B cell (primary cell): ENCODE measurements at regions of chr4 and their contacts with region 1.

Region 1: GRCh38 chr4:42568610-42569207 is 88.2 kb downstream of the ATP8A1 start:
- DNase-seq: peak; percentile 80
- ATAC-seq: peak; percentile 90
- H3K4me3 ChIP-seq: no peak overlapping the region
- H3K4me3 Mint-ChIP-seq: no peak overlapping the region
- H3K27ac ChIP-seq: peak overlapping the region in 1 of 2 donors; percentile 17
- H3K27ac Mint-ChIP-seq: no peak overlapping the region
- H3K4me1 ChIP-seq: no peaks in the 10 kb centered on the region
- H3K4me1 Mint-ChIP-seq: no peaks in the 10 kb centered on the region
- H3K27me3 ChIP-seq: no peaks in the 10 kb centered on the region
- H3K27me3 Mint-ChIP-seq: no peaks in the 10 kb centered on the region
- CTCF ChIP-seq: peak; percentile 90

Region 2: DNA sequence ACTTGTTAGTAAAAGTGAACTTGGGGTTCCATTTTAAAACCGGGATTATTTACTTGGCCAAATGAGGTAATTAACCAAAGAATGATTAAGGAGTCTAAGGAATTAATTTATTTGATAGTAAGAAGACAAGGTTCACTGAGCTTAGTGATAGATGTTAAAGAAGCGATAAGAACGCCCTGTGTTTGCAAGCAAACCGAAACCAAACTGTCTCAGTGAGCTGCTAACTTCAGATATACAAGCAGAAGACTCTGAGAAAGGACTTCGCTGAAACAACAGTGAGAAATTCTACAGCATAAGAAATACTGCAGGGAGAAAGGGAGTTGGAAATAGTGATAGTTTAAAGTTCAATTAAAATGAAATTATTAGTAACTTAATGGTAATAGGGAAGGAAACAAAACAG is 209.0 kb before region 1 on chr4:
- CTCF ChIA-PET with region 1: no interaction called
- POLR2A ChIA-PET with region 1: no interaction called
- intact Hi-C with region 1: no loop called
- DNase-seq: no peak
- ATAC-seq: no peak
- H3K4me3 ChIP-seq: no peak overlapping the region
- H3K4me3 Mint-ChIP-seq: no peak overlapping the region
- H3K27ac ChIP-seq: no peak overlapping the region
- H3K27ac Mint-ChIP-seq: no peak overlapping the region
- H3K4me1 ChIP-seq: no peaks in the 10 kb centered on the region
- H3K4me1 Mint-ChIP-seq: no peaks in the 10 kb centered on the region
- H3K27me3 ChIP-seq: peaks cover 0 to 3% (median 2%) of the 10 kb centered on the region in 4 experiments
- H3K27me3 Mint-ChIP-seq: peaks cover 31% of the 10 kb centered on the region
- CTCF ChIP-seq: no peak

Region 3: DNA sequence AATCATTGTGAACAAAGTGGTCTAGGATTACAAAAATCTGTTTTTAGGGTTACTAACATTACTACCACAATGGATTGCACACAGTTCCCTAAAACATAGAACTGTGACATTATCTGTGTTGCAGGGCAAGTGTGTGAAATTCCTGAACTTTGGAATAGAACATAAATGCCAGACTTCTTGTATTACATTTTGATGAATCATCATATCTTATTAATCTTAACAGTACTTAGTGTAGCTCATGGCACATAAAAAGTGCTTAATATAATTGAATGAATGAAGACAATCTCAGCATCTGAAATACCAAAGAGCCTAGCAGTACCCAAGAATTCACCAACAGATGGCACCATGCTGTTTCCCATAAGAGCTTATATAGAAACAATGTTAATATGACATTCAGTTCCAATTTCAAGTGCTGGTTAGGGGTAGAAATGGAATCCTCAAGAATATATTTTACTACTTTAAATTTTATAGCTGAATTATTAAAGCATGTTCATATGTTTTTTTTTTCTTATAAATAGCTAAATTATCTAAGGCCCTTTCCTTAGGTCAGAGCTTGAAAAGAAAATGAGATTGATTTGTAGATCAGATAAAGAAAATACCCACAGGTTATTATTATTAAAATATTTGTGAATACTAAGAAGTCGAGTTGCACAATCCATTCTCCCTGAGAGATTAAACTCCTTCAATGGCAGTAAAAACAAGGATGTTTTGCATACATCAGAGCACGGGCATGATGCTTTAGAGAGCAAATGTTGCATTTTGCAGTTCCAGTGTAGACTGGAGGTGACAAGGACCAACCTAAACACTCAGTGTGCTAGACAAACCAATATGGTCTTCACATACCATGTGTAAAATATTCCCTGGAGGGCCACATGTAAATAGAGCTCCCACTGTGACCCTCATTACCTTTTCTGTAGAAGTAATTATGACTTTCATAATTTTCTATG is 197.1 kb before region 1 on chr4:
- CTCF ChIA-PET with region 1: no interaction called
- POLR2A ChIA-PET with region 1: no interaction called
- intact Hi-C with region 1: no loop called
- DNase-seq: peak; percentile 31
- ATAC-seq: no peak
- H3K4me3 ChIP-seq: no peak overlapping the region
- H3K4me3 Mint-ChIP-seq: no peak overlapping the region
- H3K27ac ChIP-seq: no peak overlapping the region
- H3K27ac Mint-ChIP-seq: no peak overlapping the region
- H3K4me1 ChIP-seq: no peaks in the 10 kb centered on the region
- H3K4me1 Mint-ChIP-seq: no peaks in the 10 kb centered on the region
- H3K27me3 ChIP-seq: peaks cover 0 to 5% (median 0%) of the 10 kb centered on the region in 4 experiments
- H3K27me3 Mint-ChIP-seq: peaks cover 15% of the 10 kb centered on the region
- CTCF ChIP-seq: peak; percentile 56

Region 4: GRCh38 chr4:42488114-42488513 is 80.6 kb before region 1 on chr4:
- CTCF ChIA-PET with region 1: no interaction called
- POLR2A ChIA-PET with region 1: no interaction called
- intact Hi-C with region 1: no loop called
- DNase-seq: no peak
- ATAC-seq: no peak
- H3K4me3 ChIP-seq: no peak overlapping the region
- H3K4me3 Mint-ChIP-seq: no peak overlapping the region
- H3K27ac ChIP-seq: no peak overlapping the region
- H3K27ac Mint-ChIP-seq: no peak overlapping the region
- H3K4me1 ChIP-seq: peaks cover 0 to 4% of the 10 kb centered on the region in 2 donors
- H3K4me1 Mint-ChIP-seq: peaks cover 13% of the 10 kb centered on the region
- H3K27me3 ChIP-seq: no peaks in the 10 kb centered on the region
- H3K27me3 Mint-ChIP-seq: no peaks in the 10 kb centered on the region
- CTCF ChIP-seq: no peak

Region 5: DNA sequence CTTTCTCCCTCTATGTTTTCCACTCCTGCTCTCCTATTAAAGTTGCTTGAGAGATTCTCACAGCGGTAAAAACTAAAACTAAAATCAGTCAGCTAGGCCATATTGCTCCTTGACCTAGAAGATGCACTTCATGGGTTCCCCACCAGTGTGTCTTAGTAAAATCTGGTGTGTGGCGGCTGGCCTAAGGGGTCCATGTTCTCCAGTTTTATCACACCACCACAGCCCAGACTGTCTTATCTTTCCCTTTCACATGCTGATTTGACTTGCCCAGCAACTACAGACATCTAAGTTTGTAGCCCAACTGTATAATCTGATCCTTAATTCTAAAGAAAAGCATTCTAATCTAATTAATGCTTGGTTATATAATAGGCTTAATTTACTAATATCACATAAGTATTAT is 20.2 kb after region 1 on chr4:
- CTCF ChIA-PET with region 1: interaction called, 11 read pairs
- POLR2A ChIA-PET with region 1: no interaction called
- intact Hi-C with region 1: no loop called
- DNase-seq: no peak
- ATAC-seq: no peak
- H3K4me3 ChIP-seq: no peak overlapping the region
- H3K4me3 Mint-ChIP-seq: no peak overlapping the region
- H3K27ac ChIP-seq: no peak overlapping the region
- H3K27ac Mint-ChIP-seq: no peak overlapping the region
- H3K4me1 ChIP-seq: no peaks in the 10 kb centered on the region
- H3K4me1 Mint-ChIP-seq: peaks cover 3% of the 10 kb centered on the region
- H3K27me3 ChIP-seq: no peaks in the 10 kb centered on the region
- H3K27me3 Mint-ChIP-seq: no peaks in the 10 kb centered on the region
- CTCF ChIP-seq: no peak

Region 6: GRCh38 chr4:42678512-42678911 is 109.8 kb after region 1 on chr4:
- CTCF ChIA-PET with region 1: interaction called, 13 read pairs
- POLR2A ChIA-PET with region 1: no interaction called
- intact Hi-C with region 1: no loop called
- DNase-seq: peak; percentile 22
- ATAC-seq: no peak
- H3K4me3 ChIP-seq: no peak overlapping the region
- H3K4me3 Mint-ChIP-seq: no peak overlapping the region
- H3K27ac ChIP-seq: peak overlapping the region in 1 of 2 donors; percentile 36
- H3K27ac Mint-ChIP-seq: no peak overlapping the region
- H3K4me1 ChIP-seq: peaks cover 3 to 11% of the 10 kb centered on the region in 2 donors
- H3K4me1 Mint-ChIP-seq: peaks cover 3% of the 10 kb centered on the region
- H3K27me3 ChIP-seq: no peaks in the 10 kb centered on the region
- H3K27me3 Mint-ChIP-seq: no peaks in the 10 kb centered on the region
- CTCF ChIP-seq: no peak

Region 7: DNA sequence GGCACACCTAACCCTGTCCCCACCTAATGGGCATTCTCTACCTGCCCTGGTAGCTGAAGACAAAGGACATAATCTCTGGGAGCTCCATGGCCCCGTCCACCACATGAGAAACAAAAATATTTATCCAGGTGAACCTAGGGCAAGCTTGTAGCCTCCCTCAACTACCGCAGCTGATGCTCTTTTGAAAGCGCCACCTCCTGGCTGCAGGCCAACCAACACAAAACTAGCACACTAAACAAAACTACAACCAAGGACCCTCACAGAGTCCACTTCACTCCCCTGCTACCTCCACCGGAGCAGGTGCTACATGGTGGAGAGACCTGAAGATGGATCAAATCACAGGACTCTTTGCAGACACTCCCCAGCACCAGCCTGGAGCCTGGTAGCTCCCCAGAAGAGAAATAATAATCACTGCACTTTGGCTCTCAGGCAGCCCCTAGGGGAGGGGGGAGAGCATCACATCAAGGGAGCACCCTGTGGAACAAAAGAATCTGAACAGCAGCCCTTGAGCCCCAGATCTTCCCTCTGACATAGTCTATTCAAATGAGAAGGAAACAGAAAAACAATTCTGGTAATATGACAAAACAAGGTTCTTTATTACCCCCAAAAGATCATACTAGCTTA is 199.5 kb after region 1 on chr4:
- CTCF ChIA-PET with region 1: interaction called, 36 read pairs
- POLR2A ChIA-PET with region 1: no interaction called
- intact Hi-C with region 1: loop called (anchors 5 kb)
- DNase-seq: peak; percentile 21
- ATAC-seq: no peak
- H3K4me3 ChIP-seq: no peak overlapping the region
- H3K4me3 Mint-ChIP-seq: no peak overlapping the region
- H3K27ac ChIP-seq: no peak overlapping the region
- H3K27ac Mint-ChIP-seq: no peak overlapping the region
- H3K4me1 ChIP-seq: no peaks in the 10 kb centered on the region
- H3K4me1 Mint-ChIP-seq: no peaks in the 10 kb centered on the region
- H3K27me3 ChIP-seq: peaks cover 0 to 2% (median 0%) of the 10 kb centered on the region in 4 experiments
- H3K27me3 Mint-ChIP-seq: peaks cover 5% of the 10 kb centered on the region
- CTCF ChIP-seq: peak; percentile 30

Region 8: DNA sequence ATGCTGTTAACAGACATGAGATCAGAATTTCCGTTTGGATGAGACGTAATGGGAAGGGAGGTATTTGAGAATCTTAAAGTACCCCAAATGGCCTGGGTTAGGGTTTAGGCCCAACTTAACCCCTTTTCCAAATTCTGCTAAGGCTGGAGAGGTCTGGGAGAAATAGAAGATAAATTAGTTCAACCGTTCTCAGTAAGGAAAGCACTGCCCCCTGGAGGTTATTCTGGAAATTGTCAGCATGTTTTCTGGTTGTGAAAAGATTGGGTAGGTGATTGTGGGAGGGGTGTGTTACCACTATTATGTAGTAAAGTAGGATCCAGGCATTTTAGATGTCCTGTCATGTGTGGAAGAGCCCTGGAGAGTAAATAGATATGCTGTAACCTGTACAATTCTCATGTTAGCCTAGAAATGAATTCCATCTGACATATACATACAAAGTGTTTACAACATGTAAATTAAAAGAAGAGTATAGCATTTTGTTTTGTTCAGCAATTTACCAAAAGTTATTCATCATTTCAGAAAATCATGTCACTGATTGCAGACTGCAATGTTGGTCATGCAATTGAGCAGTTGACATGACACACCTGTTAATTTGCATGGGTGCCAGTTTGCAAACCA is 297.0 kb after region 1 on chr4:
- CTCF ChIA-PET with region 1: interaction called, 86 read pairs
- POLR2A ChIA-PET with region 1: no interaction called
- intact Hi-C with region 1: loop called (anchors 1 kb)
- DNase-seq: peak; percentile 68
- ATAC-seq: no peak
- H3K4me3 ChIP-seq: no peak overlapping the region
- H3K4me3 Mint-ChIP-seq: no peak overlapping the region
- H3K27ac ChIP-seq: no peak overlapping the region
- H3K27ac Mint-ChIP-seq: no peak overlapping the region
- H3K4me1 ChIP-seq: no peaks in the 10 kb centered on the region
- H3K4me1 Mint-ChIP-seq: no peaks in the 10 kb centered on the region
- H3K27me3 ChIP-seq: peaks cover 0 to 10% (median 0%) of the 10 kb centered on the region in 4 experiments
- H3K27me3 Mint-ChIP-seq: peaks cover 22% of the 10 kb centered on the region
- CTCF ChIP-seq: peak; percentile 86